KBM-7 (cell line): ENCODE measurements at regions of chr18 and their contacts with region 1.

Region 1: DNA sequence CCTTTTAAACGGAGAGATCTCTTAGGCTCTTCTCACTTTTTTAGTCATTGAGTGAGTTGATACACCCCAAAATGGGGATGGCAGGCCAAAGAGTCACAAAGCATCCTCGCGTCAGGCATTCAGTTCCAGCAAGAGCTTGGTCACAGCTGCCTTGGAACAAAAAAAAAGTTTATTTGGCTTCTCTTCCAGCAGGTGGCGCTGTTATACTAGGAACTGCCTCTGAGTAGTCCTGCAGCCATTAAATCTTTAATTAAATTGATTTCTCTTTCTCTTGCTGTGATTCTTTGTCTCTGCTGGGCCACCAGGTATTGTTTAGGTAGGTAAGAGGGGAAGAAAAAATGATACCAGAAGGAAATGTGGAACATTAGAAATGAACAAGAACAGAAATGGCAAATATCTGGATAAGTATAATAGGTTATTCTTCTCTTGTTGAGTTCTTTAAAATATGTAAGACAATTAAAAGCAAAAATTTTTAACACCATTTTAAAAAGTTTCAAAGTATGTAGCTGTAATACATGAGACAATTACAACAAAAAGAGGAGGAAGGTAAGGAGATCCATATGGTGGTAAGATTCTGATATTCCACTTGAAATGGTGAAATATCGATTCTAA is 175.1 kb downstream of the GALNT1 start:
- DNase-seq: peak; percentile 61

Region 2: GRCh38 chr18:35904389-35905037 is 147.9 kb after region 1 on chr18:
- in situ Hi-C with region 1: no loop called
- DNase-seq: no peak

Region 3: DNA sequence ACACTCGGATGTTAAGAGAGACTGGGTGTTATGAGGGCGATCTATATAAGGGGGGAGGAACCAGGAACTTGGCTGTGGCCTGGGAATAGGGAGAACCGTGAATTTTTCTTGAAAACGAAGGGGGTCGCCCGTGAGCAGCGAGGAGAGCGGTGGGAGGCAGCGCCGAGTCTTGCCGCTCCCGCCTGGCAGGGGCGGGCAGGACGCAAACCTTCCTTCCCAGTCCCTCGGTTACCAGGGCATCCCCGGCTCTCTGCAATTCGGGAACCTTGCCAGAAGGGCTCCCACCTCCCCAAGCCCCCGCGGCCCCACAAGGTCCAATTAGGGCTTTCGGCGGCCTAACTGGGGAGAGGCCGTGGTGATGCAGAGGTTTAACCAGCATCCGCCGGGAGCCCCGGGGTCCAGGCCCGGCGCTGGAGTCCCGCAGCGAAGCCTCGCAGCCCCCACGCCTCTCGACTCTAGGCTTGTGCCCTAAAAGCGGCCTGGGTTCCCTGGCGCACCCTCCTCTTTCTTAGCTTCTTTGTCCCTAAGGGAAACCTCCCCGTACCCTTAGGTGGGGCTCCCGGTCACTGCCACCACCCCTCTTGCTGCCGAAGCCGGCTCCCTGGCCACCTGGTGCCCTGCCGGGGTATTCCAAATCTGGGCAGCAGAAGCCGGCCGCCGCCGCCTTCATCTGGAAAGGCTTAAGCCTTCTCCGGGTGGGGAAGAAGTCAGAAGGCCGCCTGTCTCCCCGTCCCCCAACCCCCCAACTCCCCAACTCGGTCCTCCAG is 540.2 kb after region 1 on chr18:
- in situ Hi-C with region 1: loop called (anchors 25 kb)
- DNase-seq: peak; percentile 74